PC-3 (cell line): ENCODE measurements at regions of chr7 and their contacts with region 1.

Region 1: GRCh38 chr7:80659120-80660055 is 20.9 kb downstream of the CD36 start:
- DNase-seq: peak; percentile 62
- ATAC-seq: peak; percentile 37; the same call in 1 of the 2 replicates
- H3K4me3 ChIP-seq: no peak overlapping the region
- H3K27ac ChIP-seq: no peak overlapping the region
- H3K4me1 ChIP-seq: 0 out of 2 replicates have a peak, but pooled peaks cover 3% of the 10 kb centered on the region
- H3K27me3 ChIP-seq: no peaks in the 10 kb centered on the region
- CTCF ChIP-seq: peak; percentile 80

Region 2: GRCh38 chr7:80428161-80429054 is 231.0 kb before region 1 on chr7:
- CTCF ChIA-PET with region 1: no interaction called
- POLR2A ChIA-PET with region 1: no interaction called
- intact Hi-C with region 1: loop called (anchors 1 kb)
- DNase-seq: peak; percentile 73
- ATAC-seq: peak; percentile 96
- H3K4me3 ChIP-seq: 0 out of 2 replicates have a peak overlapping the region, but pooled peaks have one; percentile 25
- H3K27ac ChIP-seq: no peak overlapping the region
- H3K4me1 ChIP-seq: peaks cover 10% of the 10 kb centered on the region; the same call in 1 of the 2 replicates
- H3K27me3 ChIP-seq: no peaks in the 10 kb centered on the region
- CTCF ChIP-seq: peak; percentile 92

Region 3: GRCh38 chr7:80453699-80454340 is 205.6 kb before region 1 on chr7:
- CTCF ChIA-PET with region 1: no interaction called
- POLR2A ChIA-PET with region 1: no interaction called
- intact Hi-C with region 1: loop called (anchors 1 kb)
- DNase-seq: peak; percentile 57
- ATAC-seq: 0 out of 2 replicates have a peak, but pooled peaks have one; percentile 29
- H3K4me3 ChIP-seq: no peak overlapping the region
- H3K27ac ChIP-seq: no peak overlapping the region
- H3K4me1 ChIP-seq: peaks cover 10% of the 10 kb centered on the region
- H3K27me3 ChIP-seq: no peaks in the 10 kb centered on the region
- CTCF ChIP-seq: peak; percentile 76

Region 4: GRCh38 chr7:80499350-80499953 is 159.9 kb before region 1 on chr7:
- CTCF ChIA-PET with region 1: no interaction called
- POLR2A ChIA-PET with region 1: no interaction called
- intact Hi-C with region 1: loop called (anchors 2 kb)
- DNase-seq: peak; percentile 89
- ATAC-seq: peak; percentile 100
- H3K4me3 ChIP-seq: peak overlapping the region; percentile 30; the same call in 1 of the 2 replicates
- H3K27ac ChIP-seq: peak overlapping the region; percentile 90
- H3K4me1 ChIP-seq: peaks cover 27% of the 10 kb centered on the region
- H3K27me3 ChIP-seq: no peaks in the 10 kb centered on the region
- CTCF ChIP-seq: no peak

Region 5: DNA sequence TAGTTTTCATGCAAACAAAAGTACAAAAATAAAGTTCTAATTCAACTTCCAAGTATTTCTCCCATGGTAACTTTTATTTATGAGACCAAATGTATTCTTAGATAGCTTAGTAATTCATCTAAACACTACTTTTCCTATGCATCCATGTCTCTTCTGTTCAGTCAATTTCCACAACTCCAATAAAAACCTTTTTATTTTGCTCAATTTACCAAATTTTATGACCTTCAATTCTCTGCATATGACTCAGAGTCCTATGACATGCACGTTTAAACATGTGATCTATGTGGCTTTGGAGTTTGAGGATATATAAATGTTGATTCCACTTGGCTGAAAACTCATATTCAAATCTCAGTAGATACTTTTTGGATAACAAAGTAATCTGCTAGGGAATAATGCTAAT is 107.1 kb before region 1 on chr7:
- CTCF ChIA-PET with region 1: no interaction called
- POLR2A ChIA-PET with region 1: no interaction called
- intact Hi-C with region 1: loop called (anchors 2 kb)
- DNase-seq: peak; percentile 76
- ATAC-seq: peak; percentile 51
- H3K4me3 ChIP-seq: no peak overlapping the region
- H3K27ac ChIP-seq: peak overlapping the region; percentile 74
- H3K4me1 ChIP-seq: peaks cover 38% of the 10 kb centered on the region
- H3K27me3 ChIP-seq: no peaks in the 10 kb centered on the region
- CTCF ChIP-seq: no peak

Region 6: DNA sequence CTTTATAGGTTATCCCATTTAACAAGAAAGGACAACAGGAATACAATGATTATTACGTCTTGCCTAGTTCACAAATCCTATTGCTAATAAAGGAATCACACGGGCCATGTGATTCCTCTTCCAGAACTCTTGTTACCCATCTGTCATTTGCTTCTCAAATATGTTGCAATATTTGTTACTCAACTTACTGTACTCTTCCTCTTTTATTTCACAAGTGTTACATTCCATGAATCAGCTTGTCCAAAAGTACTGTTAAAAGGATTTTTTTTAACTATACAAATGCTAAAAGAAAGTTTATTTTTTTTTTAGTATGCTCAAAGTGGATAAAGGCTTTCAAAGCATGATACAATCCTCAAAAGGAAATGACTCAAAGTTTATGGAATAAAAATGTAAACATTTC is 24.9 kb before region 1 on chr7:
- CTCF ChIA-PET with region 1: no interaction called
- POLR2A ChIA-PET with region 1: no interaction called
- intact Hi-C with region 1: no loop called
- DNase-seq: peak; percentile 78
- ATAC-seq: peak; percentile 95
- H3K4me3 ChIP-seq: no peak overlapping the region
- H3K27ac ChIP-seq: peak overlapping the region; percentile 46
- H3K4me1 ChIP-seq: peaks cover 16% of the 10 kb centered on the region
- H3K27me3 ChIP-seq: no peaks in the 10 kb centered on the region
- CTCF ChIP-seq: no peak